ENCODE measurements at regions of chr1 and their contacts with region 1.

Region 1: DNA sequence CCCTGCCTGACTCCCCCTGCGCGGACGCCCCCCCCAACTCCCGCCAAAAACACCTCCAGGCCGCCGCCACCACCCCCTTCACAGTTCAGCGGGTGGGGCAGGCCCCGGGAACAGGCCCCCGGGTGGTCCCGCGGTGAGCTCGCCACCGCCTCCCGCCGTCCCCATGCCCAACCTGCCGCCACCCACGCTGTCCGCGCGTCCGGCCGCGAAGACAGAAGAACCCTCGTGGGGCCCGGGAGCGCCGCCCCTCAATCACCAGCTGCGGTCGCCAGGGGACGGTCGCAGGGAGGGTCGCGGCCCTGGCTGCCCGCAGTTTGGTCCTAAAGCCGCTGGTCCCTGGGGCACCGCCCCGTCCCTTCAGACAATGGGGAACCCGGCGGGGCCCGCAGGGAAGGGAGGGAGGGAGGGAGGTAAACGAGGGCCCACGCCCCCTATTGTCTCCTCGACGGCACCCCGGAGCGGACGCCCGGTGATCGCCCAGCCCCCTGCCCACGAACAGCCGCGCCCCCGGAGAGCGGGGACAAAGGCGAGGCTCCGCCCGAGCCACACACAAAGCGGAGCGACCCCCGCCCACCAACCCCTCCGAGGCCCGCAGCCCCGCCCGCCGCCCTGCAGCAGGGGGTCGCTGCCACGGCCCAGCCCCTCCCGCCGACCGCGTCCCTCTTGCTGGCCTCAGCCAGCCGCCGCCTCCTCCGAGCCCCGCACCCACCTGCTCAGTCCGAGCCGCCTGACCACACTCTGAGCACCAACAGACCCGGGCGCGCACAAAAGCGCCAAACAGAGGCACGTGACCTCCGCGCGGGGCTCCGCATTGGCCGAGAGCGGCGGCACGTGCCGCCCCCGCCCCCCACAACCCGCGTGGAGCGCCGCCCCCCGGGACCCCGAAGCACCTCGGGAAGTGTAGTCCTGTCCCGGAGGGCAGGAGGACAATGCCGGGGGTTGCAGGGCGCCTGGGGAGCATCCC is at the start of gene STMN1:
- DNase-seq: peak; percentile 76
- ATAC-seq: peak; percentile 77
- H3K4me3 Mint-ChIP-seq: peak within 1 kb of the TSS; percentile 90
- H3K27ac Mint-ChIP-seq: peak within 1 kb of the TSS; percentile 76
- H3K4me1 Mint-ChIP-seq: peaks cover 15% of the 10 kb centered on the region
- H3K27me3 Mint-ChIP-seq: no peaks in the 10 kb centered on the region
- CTCF ChIP-seq: no peak
- total RNA-seq, gene STMN1: 24.8 and 25.6 TPM in 2 replicates

Region 2: DNA sequence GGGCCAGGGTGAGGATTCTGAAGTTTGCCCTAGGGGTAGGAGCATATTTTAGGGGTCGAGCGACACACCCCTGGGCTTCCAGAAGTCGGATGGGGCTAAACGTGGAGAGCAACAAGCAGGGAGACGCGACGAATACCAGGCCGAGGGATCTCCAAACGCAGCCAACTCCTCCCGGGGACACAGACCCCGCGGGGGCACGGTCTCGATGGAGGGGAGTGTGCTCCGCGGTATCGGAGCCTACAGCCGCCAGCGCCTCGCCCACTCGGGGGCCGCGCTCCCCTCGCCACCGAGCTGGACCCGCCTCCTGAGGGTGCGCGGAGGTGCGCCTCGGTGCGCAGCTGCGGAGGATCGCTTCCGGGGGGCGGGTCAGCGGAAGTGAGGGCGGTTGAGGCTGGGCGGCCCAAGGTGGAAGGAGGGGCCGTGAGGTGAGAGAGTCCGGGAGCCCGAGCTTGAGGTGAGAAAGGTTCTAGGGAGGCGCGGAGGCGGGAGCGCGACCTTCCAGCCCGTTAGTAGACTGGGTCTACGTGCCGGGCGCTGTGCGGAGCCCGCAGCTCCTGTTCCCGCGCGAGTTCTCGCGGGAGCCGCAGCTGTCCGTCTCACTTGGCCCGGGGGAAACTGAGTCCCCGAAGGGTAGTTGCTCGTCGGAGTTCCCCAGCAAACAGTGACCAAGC is 86.3 kb before region 1 on chr1 and contains the start of gene MTFR1L:
- CTCF ChIA-PET with region 1: no interaction called
- POLR2A ChIA-PET with region 1: no interaction called
- intact Hi-C with region 1: loop called (anchors 2 kb)
- DNase-seq: peak; percentile 93
- ATAC-seq: peak; percentile 92
- H3K4me3 Mint-ChIP-seq: peak within 1 kb of the TSS; percentile 92
- H3K27ac Mint-ChIP-seq: peak within 1 kb of the TSS; percentile 90
- H3K4me1 Mint-ChIP-seq: peaks cover 27% of the 10 kb centered on the region
- H3K27me3 Mint-ChIP-seq: no peaks in the 10 kb centered on the region
- CTCF ChIP-seq: no peak
- total RNA-seq, gene MTFR1L: 34.6 and 35.3 TPM in 2 replicates

Region 3: DNA sequence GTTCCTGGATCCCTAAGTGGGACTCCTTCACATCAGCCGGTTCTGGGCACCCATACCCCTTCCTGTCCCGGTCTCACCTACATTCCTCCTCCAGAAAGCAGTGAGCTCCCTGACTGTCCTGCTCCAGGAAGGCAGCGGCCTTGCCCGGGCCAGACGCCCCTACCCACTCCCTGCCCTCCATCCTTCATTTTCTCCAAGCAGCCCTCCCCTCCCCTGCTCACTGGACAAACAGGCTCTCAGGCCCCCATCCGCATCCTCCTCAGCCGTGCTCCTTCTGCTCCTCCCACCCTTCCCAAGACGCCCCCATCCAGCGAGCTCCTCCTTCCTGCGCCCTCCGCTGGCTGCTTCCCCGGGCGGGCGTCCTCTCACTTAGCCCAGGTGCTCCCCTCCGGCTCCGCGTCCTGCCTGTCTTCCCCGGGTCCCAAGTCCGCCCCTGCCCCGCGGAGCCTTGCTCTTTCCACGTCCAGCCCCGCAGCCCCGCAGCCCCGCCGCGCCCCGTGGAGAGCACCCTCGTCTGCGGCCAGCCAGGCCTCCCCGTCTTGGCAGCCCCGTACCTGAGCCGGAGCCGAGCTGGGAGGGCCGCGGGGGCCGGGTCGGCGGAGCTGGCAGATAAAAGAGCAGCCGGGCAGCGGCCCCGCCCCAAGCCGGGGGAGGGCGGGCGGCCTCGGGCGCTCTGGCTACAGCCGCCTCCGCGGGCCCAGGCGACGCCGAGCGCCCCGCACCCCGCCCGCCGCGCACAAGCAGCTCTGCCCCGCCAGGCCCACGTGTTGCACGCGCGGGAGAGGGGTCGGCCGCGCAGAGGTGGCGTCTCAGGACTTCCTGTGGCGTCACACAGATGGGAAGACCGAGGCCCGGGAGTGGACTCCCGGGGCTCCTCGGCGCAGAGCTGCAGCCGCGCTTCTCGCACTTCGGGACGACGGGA is 30.8 kb before region 1 on chr1 and contains the start of gene PAQR7:
- CTCF ChIA-PET with region 1: no interaction called
- POLR2A ChIA-PET with region 1: no interaction called
- intact Hi-C with region 1: loop called (anchors 2 kb)
- DNase-seq: peak; percentile 68
- ATAC-seq: peak; percentile 88
- H3K4me3 Mint-ChIP-seq: peak within 1 kb of the TSS; percentile 84
- H3K27ac Mint-ChIP-seq: peak within 1 kb of the TSS; percentile 56
- H3K4me1 Mint-ChIP-seq: peaks cover 35% of the 10 kb centered on the region
- H3K27me3 Mint-ChIP-seq: no peaks in the 10 kb centered on the region
- CTCF ChIP-seq: no peak
- total RNA-seq, gene PAQR7: 3.7 and 4.6 TPM in 2 replicates

Region 4: GRCh38 chr1:25933479-25934365 is 27.8 kb after region 1 on chr1:
- CTCF ChIA-PET with region 1: no interaction called
- POLR2A ChIA-PET with region 1: no interaction called
- intact Hi-C with region 1: no loop called
- DNase-seq: no peak
- ATAC-seq: no peak
- H3K4me3 Mint-ChIP-seq: no peak overlapping the region
- H3K27ac Mint-ChIP-seq: no peak overlapping the region
- H3K4me1 Mint-ChIP-seq: no peaks in the 10 kb centered on the region
- H3K27me3 Mint-ChIP-seq: peaks cover 15% of the 10 kb centered on the region
- CTCF ChIP-seq: no peak

Region 5: DNA sequence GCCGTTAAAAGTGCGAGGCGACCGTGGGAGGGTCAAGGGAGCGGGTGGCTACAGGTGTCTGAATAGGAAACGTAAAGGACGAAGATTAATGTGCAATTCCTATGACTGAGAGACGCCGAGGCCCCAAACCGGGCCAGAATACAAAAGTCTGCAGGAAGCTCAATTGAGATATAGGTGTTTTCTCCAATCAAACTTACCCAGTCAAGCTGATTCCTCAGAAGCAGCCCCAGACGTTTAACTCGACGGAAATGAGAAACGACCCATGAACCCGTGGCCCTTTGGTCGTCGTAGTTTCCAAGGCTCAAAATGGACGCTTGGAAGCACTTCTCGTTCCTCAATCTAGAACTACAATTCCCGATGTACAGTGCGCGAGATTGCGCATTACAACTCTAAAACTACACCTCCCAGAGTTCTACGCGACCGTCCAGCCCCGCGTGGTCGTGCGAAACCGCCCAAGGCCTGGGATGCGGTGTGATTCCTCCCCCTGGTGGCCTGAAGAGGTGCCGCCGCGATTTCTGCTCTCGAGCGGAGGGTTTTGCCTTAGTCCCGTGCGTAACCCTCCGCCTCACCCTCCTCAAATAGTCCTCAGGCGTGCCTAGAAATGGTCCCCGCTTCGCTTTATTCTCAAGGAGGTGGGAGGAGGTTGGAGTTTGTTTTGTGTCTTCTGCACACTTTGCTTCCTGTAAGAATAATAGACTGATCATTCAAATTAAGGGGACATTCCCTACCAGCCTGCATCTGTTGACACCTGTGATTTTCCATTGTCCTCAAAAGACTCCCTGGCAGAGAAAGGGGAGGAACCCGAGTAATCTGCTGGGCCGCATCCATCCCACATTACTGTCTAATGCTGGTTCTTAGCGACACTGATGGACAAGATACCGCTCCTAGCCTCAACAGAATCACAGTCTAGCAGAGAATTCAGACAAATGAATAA is 92.1 kb after region 1 on chr1 and contains the start of gene PAFAH2:
- CTCF ChIA-PET with region 1: interaction called, 11 read pairs
- POLR2A ChIA-PET with region 1: interaction called, 25 read pairs
- intact Hi-C with region 1: loop called (anchors 1 kb)
- DNase-seq: peak; percentile 85
- ATAC-seq: peak; percentile 98
- H3K4me3 Mint-ChIP-seq: peak within 1 kb of the TSS; percentile 95
- H3K27ac Mint-ChIP-seq: peak within 1 kb of the TSS; percentile 95
- H3K4me1 Mint-ChIP-seq: peaks cover 18% of the 10 kb centered on the region
- H3K27me3 Mint-ChIP-seq: no peaks in the 10 kb centered on the region
- CTCF ChIP-seq: peak; percentile 89
- total RNA-seq, gene PAFAH2: 5.4 and 9.2 TPM in 2 replicates

Region 6: GRCh38 chr1:26111530-26112406 is 205.8 kb after region 1 on chr1 and contains the start of gene PDIK1L:
- CTCF ChIA-PET with region 1: no interaction called
- POLR2A ChIA-PET with region 1: no interaction called
- intact Hi-C with region 1: loop called (anchors 2 kb)
- DNase-seq: peak; percentile 90
- ATAC-seq: peak; percentile 80
- H3K4me3 Mint-ChIP-seq: peak within 1 kb of the TSS; percentile 94
- H3K27ac Mint-ChIP-seq: peak within 1 kb of the TSS; percentile 89
- H3K4me1 Mint-ChIP-seq: peaks cover 20% of the 10 kb centered on the region
- H3K27me3 Mint-ChIP-seq: no peaks in the 10 kb centered on the region
- CTCF ChIP-seq: no peak
- total RNA-seq, gene PDIK1L: 9.4 and 10.5 TPM in 2 replicates

Region 7: DNA sequence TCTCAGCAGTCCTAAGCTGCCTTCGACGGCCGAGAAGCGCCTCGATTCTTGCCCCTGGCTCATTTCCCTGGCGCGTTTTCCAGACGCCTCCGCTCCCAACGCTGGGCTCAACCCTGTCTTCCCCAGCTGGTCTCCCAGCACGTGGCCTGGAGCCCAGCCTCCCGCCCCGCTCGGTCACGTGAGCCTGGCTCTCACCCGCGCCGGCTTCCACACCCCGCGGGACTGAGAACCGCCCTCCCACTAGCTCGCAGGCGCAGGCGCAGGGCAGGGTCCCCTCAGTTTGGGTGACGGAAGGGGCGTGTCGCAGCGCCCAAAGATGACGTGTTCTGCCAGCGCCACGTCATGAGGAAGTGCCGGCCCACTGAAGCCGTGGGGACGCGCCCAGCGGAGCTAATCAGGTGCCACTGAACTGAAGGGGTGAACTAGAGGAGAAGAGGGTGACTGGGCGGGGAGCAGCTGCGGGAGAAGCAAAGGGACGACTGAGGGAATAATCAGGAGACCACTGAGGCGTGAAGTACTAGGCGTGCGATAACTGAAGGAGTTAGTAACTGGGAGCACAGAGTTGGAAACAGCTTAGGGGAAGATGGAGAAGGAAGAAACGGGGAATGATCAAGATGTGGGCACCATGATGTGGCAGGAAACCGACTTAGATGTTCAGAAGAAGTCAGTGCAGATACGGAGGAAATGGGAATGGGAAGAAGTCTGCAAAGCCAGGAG is 526.2 kb after region 1 on chr1 and contains the start of gene DHDDS:
- CTCF ChIA-PET with region 1: no interaction called
- POLR2A ChIA-PET with region 1: no interaction called
- intact Hi-C with region 1: loop called (anchors 5 kb)
- DNase-seq: peak; percentile 99
- ATAC-seq: peak; percentile 95
- H3K4me3 Mint-ChIP-seq: peak within 1 kb of the TSS; percentile 95
- H3K27ac Mint-ChIP-seq: peak within 1 kb of the TSS; percentile 94
- H3K4me1 Mint-ChIP-seq: peaks cover 23% of the 10 kb centered on the region
- H3K27me3 Mint-ChIP-seq: no peaks in the 10 kb centered on the region
- CTCF ChIP-seq: no peak
- total RNA-seq, gene DHDDS: 53.0 and 65.0 TPM in 2 replicates